ENCODE measurements at regions of chr12 and their contacts with region 1.

Region 1: GRCh38 chr12:89352492-89353187 is at the start of gene DUSP6:
- DNase-seq: peak; percentile 92
- H3K4me3 Mint-ChIP-seq: peak within 1 kb of the TSS; percentile 98
- H3K27ac Mint-ChIP-seq: peak within 1 kb of the TSS; percentile 97
- H3K4me1 Mint-ChIP-seq: peaks cover 46% of the 10 kb centered on the region
- H3K27me3 Mint-ChIP-seq: peaks cover 3% of the 10 kb centered on the region
- total RNA-seq, gene DUSP6: 108 and 115 TPM in 2 replicates

Region 2: DNA sequence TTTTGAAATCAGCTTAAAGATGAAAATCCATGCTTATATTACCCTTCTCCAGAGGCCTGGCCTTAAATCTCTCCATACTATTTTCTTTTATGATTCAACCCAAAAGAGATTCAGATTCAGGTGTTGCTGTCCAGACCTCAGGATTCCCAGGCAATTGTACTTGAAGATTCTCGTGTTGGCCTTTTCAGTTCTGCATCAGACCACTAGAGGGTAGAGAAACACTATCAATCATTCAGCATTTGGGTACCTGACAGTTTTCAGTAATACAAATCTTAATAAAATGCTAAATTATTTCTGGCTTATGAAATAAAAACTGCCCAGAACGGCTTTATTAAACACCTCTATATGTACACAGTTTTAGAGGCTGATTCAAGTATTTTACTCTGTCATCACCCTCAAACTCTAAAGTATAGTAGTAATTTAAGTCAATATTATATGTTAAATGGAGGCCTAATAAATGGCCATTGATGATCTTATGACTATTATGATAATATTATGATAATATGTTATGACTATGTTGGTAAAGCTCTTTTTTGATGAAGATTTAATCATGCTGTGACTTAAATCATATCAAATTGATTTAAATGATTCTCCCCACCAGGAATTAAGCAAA is 301.5 kb before region 1 on chr12:
- intact Hi-C with region 1: loop called (anchors 1 kb)
- DNase-seq: no peak
- H3K4me3 Mint-ChIP-seq: no peak overlapping the region
- H3K27ac Mint-ChIP-seq: no peak overlapping the region
- H3K4me1 Mint-ChIP-seq: peaks cover 31% of the 10 kb centered on the region
- H3K27me3 Mint-ChIP-seq: no peaks in the 10 kb centered on the region

Region 3: GRCh38 chr12:89244536-89244935 is 108.1 kb before region 1 on chr12:
- intact Hi-C with region 1: loop called (anchors 1 kb)
- DNase-seq: peak; percentile 45
- H3K4me3 Mint-ChIP-seq: peak overlapping the region; percentile 32
- H3K27ac Mint-ChIP-seq: peak overlapping the region; percentile 84
- H3K4me1 Mint-ChIP-seq: peaks cover 53% of the 10 kb centered on the region
- H3K27me3 Mint-ChIP-seq: no peaks in the 10 kb centered on the region

Region 4: GRCh38 chr12:89373763-89374572 is 21.3 kb after region 1 on chr12:
- intact Hi-C with region 1: loop called (anchors 1 kb)
- DNase-seq: no peak
- H3K4me3 Mint-ChIP-seq: no peak overlapping the region
- H3K27ac Mint-ChIP-seq: no peak overlapping the region
- H3K4me1 Mint-ChIP-seq: peaks cover 50% of the 10 kb centered on the region
- H3K27me3 Mint-ChIP-seq: no peaks in the 10 kb centered on the region

Region 5: DNA sequence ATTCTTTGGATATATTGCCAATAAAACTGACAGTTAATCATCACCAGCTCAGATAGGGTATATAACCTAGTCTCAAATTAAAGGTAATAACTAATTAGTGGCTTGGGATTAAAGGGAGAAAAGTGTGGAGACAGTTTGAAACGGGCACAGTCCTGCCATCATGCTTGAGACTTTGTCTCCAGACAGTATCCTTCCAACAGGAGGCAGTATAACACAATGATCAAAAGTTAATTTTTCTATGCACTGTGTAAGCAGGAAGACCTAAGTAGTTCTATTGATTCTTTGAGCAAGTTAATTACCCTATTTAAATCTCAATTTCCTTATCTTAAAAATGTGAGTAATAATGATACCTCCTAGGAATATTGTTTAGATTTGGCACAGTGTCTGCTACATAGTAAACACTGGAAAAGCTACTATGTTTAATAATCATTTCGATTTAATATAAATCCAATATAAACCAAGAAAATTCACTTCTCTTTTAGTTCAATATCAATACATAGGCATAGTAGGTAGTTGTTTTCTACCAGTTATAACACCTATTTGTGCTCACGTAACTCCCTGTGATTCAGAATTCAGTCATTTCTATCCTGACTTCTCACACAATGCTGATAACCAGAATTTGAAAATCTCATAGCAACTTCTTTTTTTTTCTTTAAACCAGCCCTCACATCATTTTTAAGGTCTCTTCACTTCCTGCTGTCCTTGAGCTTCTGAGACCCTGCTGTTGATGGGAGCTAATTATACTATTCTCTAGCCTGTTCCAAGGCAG is 118.3 kb after region 1 on chr12:
- intact Hi-C with region 1: loop called (anchors 1 kb)
- DNase-seq: no peak
- H3K4me3 Mint-ChIP-seq: no peak overlapping the region
- H3K27ac Mint-ChIP-seq: peak overlapping the region; percentile 22
- H3K4me1 Mint-ChIP-seq: peaks cover 76% of the 10 kb centered on the region
- H3K27me3 Mint-ChIP-seq: no peaks in the 10 kb centered on the region